ENCODE measurements at regions of chr9 and their contacts with region 1.

Region 1: GRCh38 chr9:102253099-102253498 is 514.7 kb upstream of the GRIN3A start:
- DNase-seq: no peak
- H3K4me3 Mint-ChIP-seq: no peak overlapping the region
- H3K27ac Mint-ChIP-seq: no peak overlapping the region
- H3K4me1 Mint-ChIP-seq: no peaks in the 10 kb centered on the region
- H3K27me3 Mint-ChIP-seq: no peaks in the 10 kb centered on the region

Region 2: GRCh38 chr9:102209176-102209575 is 43.9 kb before region 1 on chr9:
- intact Hi-C with region 1: loop called (anchors 10 kb)
- DNase-seq: no peak
- H3K4me3 Mint-ChIP-seq: no peak overlapping the region
- H3K27ac Mint-ChIP-seq: no peak overlapping the region
- H3K4me1 Mint-ChIP-seq: no peaks in the 10 kb centered on the region
- H3K27me3 Mint-ChIP-seq: no peaks in the 10 kb centered on the region

Measured in activated T-helper 2 cell treated with anti-CD3 and anti-CD28 coated beads, Interferon-gamma antibody, Interleukin-2, Interleukin-4, amounts not matched to agents 10 μg/mL and 5 μg/mL and 100 μg/mL, durations not matched to agents 14 hours and 24 hours and 36 hours (primary cell).